WTC11 (cell line): ENCODE measurements at regions of chr22 and their contacts with region 1.

Region 1: DNA sequence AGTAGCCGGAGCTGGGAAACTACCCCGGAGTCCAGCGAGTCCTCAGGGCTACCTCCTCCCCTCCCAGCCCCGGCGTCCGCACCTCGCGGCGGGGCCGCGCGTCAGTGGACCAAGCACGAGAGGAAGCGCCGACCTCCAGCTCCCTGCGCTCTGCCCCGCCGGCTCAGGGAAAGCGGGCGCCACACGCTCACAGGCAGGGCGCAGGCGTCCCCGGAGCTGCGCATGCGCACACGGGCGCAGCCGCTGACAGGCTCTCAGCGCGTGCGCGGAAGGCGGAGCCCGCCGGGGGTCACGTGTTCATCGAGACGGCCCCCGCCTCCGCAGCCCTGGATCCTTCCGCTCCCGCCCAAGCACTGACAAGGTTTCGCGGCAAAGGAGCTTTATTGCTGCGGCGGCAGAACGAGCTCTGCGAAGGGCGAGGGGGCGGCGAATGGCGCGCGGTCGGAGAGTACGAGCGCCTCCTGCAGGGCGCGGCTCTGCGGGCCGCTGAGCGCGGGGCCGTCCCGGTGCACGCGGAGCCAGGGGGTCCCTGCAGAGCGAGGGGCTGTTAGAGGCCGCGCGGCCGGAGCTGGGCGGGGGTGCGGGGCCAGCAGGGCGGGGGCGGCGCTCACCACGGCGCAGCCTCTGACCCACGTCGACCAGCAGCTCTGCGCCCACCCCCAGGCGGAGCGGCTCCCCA is at the start of gene SCO2:
- DNase-seq: peak; percentile 96
- ATAC-seq: peak; percentile 51
- H3K4me3 Mint-ChIP-seq: peak within 1 kb of the TSS; percentile 82
- H3K27ac Mint-ChIP-seq: peak within 1 kb of the TSS; percentile 84; the same call in 1 of the 2 replicates
- H3K4me1 Mint-ChIP-seq: peaks cover 13% of the 10 kb centered on the region
- H3K27me3 Mint-ChIP-seq: peaks cover 38% of the 10 kb centered on the region
- CTCF ChIP-seq: no peak
- total RNA-seq, gene SCO2: 1.5 to 5.5 TPM in 2 of 3 replicates, not detected in the other

Region 2: GRCh38 chr22:50507991-50508884 is 17.3 kb before region 1 on chr22 and contains the start of gene NCAPH2:
- CTCF ChIA-PET with region 1: interaction called, 60 read pairs
- POLR2A ChIA-PET with region 1: interaction called, 13 read pairs
- DNase-seq: peak; percentile 97
- ATAC-seq: peak; percentile 75
- H3K4me3 Mint-ChIP-seq: peak within 1 kb of the TSS; percentile 93
- H3K27ac Mint-ChIP-seq: peak within 1 kb of the TSS; percentile 98
- H3K4me1 Mint-ChIP-seq: peaks cover 10% of the 10 kb centered on the region
- H3K27me3 Mint-ChIP-seq: no peaks in the 10 kb centered on the region
- CTCF ChIP-seq: no peak
- total RNA-seq, gene NCAPH2: 69.8 to 78.4 TPM (median 70.3 TPM) in 3 replicates

Region 3: DNA sequence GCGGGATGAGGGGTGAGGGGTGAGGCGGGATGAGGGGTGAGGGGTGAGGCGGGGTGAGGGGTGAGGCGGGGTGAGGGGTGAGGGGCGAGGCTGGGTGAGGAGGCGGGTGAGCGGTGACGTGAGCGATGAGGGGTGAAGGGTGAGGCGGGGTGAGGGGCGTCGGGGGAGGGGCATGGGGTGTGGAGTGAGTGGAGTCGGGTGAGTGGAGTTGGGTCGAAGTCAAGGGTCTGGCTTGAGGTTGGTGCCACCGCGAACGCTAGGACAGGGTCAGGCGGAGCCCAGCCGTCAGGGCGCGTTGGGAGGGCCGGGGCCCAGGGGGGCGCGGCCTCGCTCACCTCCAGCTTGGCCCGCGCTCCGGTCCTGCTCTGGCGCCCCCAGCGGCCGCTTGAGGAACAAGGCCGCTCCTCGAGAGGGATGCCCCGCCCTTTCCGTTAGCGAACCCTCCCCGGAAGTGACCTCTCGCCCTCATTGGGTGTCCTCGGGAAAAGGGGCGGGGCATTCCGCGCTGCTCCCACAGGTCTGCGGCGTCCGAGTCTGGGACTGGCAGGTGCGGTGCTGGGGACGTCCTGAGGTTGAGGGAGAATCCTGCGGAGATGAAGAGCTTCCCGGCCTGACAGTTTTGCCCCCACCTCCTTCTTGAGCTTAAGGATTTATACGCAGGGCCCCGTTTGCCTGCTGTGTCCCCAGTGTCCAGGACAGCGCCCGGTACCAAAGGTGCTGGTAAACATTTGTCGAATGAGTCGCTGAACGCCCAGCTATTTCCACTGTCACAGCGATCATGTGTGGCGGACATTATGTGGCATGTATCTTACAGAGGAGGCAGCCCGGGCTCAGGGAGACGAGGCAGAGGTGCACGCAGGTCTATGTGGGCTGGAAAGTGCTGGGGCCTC is 37.2 kb after region 1 on chr22 and contains the start of gene SYCE3:
- CTCF ChIA-PET with region 1: interaction called, 42 read pairs
- POLR2A ChIA-PET with region 1: interaction called, 3 read pairs
- DNase-seq: peak; percentile 98
- ATAC-seq: peak; percentile 96
- H3K4me3 Mint-ChIP-seq: peak within 1 kb of the TSS; percentile 83
- H3K27ac Mint-ChIP-seq: no peak within 1 kb of the TSS
- H3K4me1 Mint-ChIP-seq: peaks cover 10% of the 10 kb centered on the region
- H3K27me3 Mint-ChIP-seq: peaks cover 39% of the 10 kb centered on the region
- CTCF ChIP-seq: peak; percentile 93
- total RNA-seq, gene SYCE3: 0.46 to 0.89 TPM (median 0.85 TPM) in 3 replicates

Region 4: DNA sequence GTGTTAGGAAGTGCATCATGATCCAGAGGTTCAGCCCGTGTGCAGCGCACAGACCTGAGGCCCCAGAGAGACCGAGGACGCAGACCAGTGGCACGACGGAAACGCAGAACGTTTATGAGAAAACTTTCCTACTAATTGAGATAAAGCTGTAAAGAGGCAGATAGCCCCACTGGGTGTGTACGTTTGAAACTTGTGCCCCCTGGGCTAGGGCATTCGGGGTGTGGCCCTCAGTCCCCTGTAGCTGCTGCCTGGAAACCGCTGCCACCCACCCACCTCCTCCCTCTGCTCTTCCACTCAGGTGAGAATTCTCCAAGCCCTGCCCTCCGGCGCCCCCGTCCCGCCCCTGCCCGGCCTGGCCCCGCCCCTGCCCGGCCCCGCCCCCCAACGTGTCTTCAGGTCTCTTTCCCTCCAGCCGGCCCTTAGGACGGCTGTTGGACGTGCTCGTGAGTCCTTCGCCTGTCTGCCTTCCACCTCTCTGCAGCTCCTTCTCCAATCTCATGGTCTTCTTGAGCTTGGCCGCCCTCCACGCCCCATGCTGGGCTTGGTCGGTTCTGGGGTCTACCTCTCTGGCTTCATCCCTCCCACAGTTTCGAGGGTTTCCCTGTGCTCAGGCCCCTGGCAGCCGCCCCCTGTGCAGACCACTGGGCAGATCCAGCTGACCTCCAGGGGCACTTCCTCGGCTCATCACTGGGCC is 87.1 kb after region 1 on chr22:
- CTCF ChIA-PET with region 1: interaction called, 12 read pairs
- POLR2A ChIA-PET with region 1: interaction called, 3 read pairs
- DNase-seq: peak; percentile 51
- ATAC-seq: peak; percentile 89
- H3K4me3 Mint-ChIP-seq: no peak overlapping the region
- H3K27ac Mint-ChIP-seq: no peak overlapping the region
- H3K4me1 Mint-ChIP-seq: peaks cover 14% of the 10 kb centered on the region
- H3K27me3 Mint-ChIP-seq: peaks cover 16% of the 10 kb centered on the region
- CTCF ChIP-seq: no peak

Region 5: DNA sequence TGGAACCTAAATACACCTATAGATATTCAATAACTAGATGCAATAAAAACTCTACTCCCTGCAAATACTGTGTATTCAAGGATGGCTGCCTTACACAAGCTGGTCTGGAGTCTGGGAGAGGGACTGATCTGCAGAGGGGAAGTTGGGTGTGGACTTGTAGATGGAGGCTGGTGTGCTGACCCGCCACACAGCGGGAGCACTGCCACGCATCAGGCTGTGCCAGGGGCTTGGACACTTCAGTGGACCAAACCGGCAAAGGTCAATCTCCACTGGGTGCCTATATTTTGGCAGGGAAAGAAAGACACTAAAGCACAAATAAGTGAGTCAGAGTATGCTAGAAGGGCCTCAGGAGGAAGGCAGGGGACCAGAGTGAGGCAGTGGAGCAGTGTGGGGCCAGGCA is 145.0 kb after region 1 on chr22:
- CTCF ChIA-PET with region 1: no interaction called
- POLR2A ChIA-PET with region 1: no interaction called
- DNase-seq: no peak
- ATAC-seq: no peak
- H3K4me3 Mint-ChIP-seq: no peak overlapping the region
- H3K27ac Mint-ChIP-seq: no peak overlapping the region
- H3K4me1 Mint-ChIP-seq: peaks cover 11% of the 10 kb centered on the region
- H3K27me3 Mint-ChIP-seq: peaks cover 71% of the 10 kb centered on the region
- CTCF ChIP-seq: no peak

Region 6: GRCh38 chr22:50696797-50697561 is 171.4 kb after region 1 on chr22:
- CTCF ChIA-PET with region 1: interaction called, 16 read pairs
- POLR2A ChIA-PET with region 1: interaction called, 3 read pairs
- DNase-seq: peak; percentile 76
- ATAC-seq: peak; percentile 55
- H3K4me3 Mint-ChIP-seq: peak overlapping the region; percentile 73
- H3K27ac Mint-ChIP-seq: no peak overlapping the region
- H3K4me1 Mint-ChIP-seq: peaks cover 8% of the 10 kb centered on the region
- H3K27me3 Mint-ChIP-seq: peaks cover 37% of the 10 kb centered on the region
- CTCF ChIP-seq: peak; percentile 71